CD14-positive monocyte (primary cell): ENCODE measurements at regions of chr16 and their contacts with region 1.

Region 1: DNA sequence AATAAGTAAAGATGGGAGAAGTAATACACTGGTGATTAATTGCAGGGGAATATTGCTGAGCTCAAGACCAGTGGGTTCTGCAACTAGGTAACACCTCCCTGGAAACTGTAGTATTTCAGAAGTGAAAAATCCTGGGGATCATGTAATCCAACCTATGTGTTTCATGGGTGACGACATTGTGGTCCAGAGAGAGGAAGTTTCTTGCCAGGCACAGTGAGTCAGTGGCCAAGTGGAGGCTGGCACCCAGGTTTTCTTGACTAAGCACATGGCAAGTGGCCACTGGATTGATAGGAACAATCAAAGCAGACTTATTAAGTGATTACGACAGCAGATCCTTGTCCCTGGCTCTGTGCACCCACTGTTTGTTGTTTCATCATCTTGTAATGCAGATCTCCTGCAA is 14.6 kb upstream of the CIITA start:
- DNase-seq: peak; percentile 92 to 98 (median 97)
- H3K4me3 ChIP-seq: peak overlapping the region in 1 of 3 experiments; percentile 14
- H3K4me3 Mint-ChIP-seq: no peak overlapping the region
- H3K27ac ChIP-seq: no peak overlapping the region
- H3K27ac Mint-ChIP-seq: peak overlapping the region; percentile 10 to 83 (median 76)
- H3K4me1 ChIP-seq: peaks cover 47 to 52% of the 10 kb centered on the region in 2 donors
- H3K4me1 Mint-ChIP-seq: peaks cover 49% of the 10 kb centered on the region
- H3K27me3 ChIP-seq: no peaks in the 10 kb centered on the region
- H3K27me3 Mint-ChIP-seq: peaks cover 0 to 2% (median 2%) of the 10 kb centered on the region in 3 donors
- CTCF ChIP-seq: no peak

Region 2: DNA sequence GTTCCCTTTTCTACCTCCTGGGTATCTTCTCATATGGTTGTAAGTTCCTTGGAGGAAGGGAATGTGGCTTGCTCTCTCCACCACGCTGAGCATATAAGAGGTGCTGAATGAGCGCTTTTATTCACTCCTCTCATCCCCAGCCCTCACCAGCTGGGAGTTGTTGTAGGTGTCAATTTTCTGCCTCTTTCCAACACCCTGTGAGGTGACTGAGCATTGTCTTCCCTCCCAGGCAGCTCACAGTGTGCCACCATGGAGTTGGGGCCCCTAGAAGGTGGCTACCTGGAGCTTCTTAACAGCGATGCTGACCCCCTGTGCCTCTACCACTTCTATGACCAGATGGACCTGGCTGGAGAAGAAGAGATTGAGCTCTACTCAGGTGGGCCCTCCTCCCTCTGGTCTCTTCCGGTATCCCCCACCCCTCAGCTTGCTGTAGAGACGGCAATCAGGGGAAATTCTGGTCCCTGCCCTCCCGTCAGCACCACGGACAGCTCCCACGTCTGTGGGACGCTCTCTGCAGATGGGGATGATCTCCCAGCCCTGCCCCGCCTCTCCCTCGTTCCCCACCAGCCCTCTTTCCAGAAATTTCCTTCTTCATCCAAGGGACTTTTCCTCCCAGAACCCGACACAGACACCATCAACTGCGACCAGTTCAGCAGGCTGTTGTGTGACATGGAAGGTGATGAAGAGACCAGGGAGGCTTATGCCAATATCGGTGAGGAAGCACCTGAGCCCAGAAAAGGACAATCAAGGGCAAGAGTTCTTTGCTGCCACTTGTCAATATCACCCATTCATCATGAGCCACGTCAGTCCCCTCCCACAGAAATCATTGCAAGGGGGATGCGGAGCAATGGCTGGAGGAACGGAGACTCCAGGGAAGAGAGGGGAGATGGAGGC is 32.9 kb after region 1 on chr16:
- intact Hi-C with region 1: loop called in 1 of 2 experiments (anchors 5 kb)
- DNase-seq: no peak
- H3K4me3 ChIP-seq: peak overlapping the region in 1 of 3 experiments; percentile 55
- H3K4me3 Mint-ChIP-seq: no peak overlapping the region
- H3K27ac ChIP-seq: peak overlapping the region; percentile 34 to 77
- H3K27ac Mint-ChIP-seq: peak overlapping the region; percentile 68 to 94 (median 89)
- H3K4me1 ChIP-seq: peaks cover 73 to 77% of the 10 kb centered on the region in 2 donors
- H3K4me1 Mint-ChIP-seq: peaks cover 74% of the 10 kb centered on the region
- H3K27me3 ChIP-seq: no peaks in the 10 kb centered on the region
- H3K27me3 Mint-ChIP-seq: peaks cover 0 to 3% (median 0%) of the 10 kb centered on the region in 3 donors
- CTCF ChIP-seq: no peak

Region 3: GRCh38 chr16:10906914-10907756 is 44.7 kb after region 1 on chr16:
- intact Hi-C with region 1: loop called in 1 of 2 experiments (anchors 5 kb)
- DNase-seq: no peak
- H3K4me3 ChIP-seq: no peak overlapping the region
- H3K4me3 Mint-ChIP-seq: no peak overlapping the region
- H3K27ac ChIP-seq: peak overlapping the region in 1 of 2 donors; percentile 8
- H3K27ac Mint-ChIP-seq: peak overlapping the region in 2 of 7 donors; percentile 21 to 60
- H3K4me1 ChIP-seq: no peaks in the 10 kb centered on the region
- H3K4me1 Mint-ChIP-seq: no peaks in the 10 kb centered on the region
- H3K27me3 ChIP-seq: no peaks in the 10 kb centered on the region
- H3K27me3 Mint-ChIP-seq: no peaks in the 10 kb centered on the region
- CTCF ChIP-seq: no peak